Activated B cell treated with CpG ODN at 0.5 μM for 24 hours (primary cell): ENCODE measurements at regions of chr11 and their contacts with region 1.

Region 1: DNA sequence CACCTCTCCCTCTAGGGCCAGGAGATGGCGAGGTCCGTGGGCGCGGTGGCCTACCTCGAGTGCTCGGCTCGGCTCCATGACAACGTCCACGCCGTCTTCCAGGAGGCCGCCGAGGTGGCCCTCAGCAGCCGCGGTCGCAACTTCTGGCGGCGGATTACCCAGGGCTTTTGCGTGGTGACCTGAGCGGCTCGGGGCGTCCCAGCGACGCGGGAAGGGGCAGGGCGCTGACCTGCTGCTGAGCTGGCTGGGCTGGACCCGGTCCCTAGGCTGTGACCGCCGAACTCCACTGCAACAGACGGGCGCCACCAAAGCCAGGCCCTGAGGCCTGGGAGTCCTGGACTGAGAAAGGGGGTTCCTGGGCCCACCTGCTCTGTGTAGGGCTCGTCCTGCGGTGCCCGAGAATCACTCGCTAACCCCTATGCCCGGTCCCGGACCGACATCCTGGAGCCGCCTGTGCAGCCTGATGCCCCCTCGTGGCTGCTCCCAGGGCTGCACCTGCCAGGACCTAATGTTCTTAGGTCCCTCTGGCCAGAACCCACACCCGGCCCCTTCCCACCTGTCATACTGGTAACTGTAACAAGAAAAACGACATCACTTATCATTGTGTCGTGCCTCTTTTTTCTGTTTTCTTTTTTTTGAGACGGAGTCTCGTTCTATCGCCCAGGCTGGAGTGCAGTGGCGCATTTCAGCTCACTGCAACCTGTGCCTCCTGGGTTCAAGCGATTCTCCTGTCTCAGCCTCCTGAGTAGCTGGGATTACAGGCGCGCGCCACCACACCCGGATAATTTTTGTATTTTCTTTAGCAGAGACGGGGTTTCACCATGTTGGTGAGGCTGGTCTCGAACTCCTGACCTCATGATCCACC is 15.0 kb downstream of the RHOD start:
- DNase-seq: peak; percentile 55
- ATAC-seq: peak; percentile 91
- H3K4me3 Mint-ChIP-seq: peak overlapping the region; percentile 32
- H3K27ac Mint-ChIP-seq: no peak overlapping the region
- H3K4me1 Mint-ChIP-seq: peaks cover 3% of the 10 kb centered on the region
- H3K27me3 Mint-ChIP-seq: peaks cover 13% of the 10 kb centered on the region
- CTCF ChIP-seq: no peak

Region 2: GRCh38 chr11:67010323-67010905 is 61.2 kb before region 1 on chr11:
- CTCF ChIA-PET with region 1: no interaction called
- POLR2A ChIA-PET with region 1: no interaction called
- intact Hi-C with region 1: no loop called
- DNase-seq: no peak
- ATAC-seq: no peak
- H3K4me3 Mint-ChIP-seq: no peak overlapping the region
- H3K27ac Mint-ChIP-seq: no peak overlapping the region
- H3K4me1 Mint-ChIP-seq: no peaks in the 10 kb centered on the region
- H3K27me3 Mint-ChIP-seq: peaks cover 26% of the 10 kb centered on the region
- CTCF ChIP-seq: no peak

Region 3: DNA sequence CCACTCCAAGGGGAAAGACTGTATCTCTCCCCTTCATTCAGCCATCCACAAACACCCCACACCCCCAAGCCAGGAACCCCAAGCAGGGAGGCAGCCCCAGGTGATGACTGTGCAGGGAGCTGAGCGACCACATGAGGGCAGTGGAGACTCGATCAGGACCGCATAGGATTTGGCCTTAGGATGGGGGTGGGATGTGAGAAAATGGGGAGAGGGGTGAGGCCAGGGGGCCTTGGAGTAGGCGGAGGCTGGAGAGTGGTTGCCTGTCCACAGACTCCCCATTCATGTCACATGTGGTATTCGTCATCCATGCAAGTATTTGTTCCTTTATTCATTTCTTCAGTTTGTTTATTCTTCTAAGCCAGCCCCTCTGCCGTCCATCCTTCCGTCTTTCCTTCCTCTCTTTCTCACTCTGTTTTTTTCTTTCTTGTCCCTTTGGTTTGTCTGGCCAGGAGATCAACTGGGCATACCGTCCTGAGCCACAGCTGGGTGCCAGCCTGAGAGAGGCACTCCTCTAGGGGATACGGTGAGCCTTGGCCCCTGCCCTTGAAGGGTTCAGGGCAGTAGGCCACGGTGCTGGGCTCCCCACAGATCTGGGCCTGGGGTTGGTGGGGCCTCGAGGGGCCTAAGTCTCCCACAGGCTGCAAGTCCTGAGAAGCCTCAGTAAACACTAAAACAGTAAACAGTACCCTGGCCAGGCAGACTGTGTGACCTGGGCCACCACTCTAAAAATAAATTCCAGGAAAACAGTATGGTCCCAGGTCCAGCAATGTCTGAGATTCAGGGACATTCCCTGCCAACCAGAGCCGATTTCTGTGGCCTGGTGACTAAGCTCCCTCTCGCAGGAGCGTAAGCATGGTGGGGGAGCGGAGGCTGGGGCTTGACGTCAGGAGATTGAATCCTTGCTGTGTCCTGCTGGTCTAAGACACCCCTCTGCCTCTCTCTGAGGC is 17.5 kb before region 1 on chr11:
- CTCF ChIA-PET with region 1: no interaction called
- POLR2A ChIA-PET with region 1: no interaction called
- intact Hi-C with region 1: loop called (anchors 2 kb)
- DNase-seq: no peak
- ATAC-seq: peak; percentile 63
- H3K4me3 Mint-ChIP-seq: no peak overlapping the region
- H3K27ac Mint-ChIP-seq: no peak overlapping the region
- H3K4me1 Mint-ChIP-seq: peaks cover 9% of the 10 kb centered on the region
- H3K27me3 Mint-ChIP-seq: peaks cover 25% of the 10 kb centered on the region
- CTCF ChIP-seq: no peak